ENCODE measurements at regions of chr22 and their contacts with region 1.

Region 1: DNA sequence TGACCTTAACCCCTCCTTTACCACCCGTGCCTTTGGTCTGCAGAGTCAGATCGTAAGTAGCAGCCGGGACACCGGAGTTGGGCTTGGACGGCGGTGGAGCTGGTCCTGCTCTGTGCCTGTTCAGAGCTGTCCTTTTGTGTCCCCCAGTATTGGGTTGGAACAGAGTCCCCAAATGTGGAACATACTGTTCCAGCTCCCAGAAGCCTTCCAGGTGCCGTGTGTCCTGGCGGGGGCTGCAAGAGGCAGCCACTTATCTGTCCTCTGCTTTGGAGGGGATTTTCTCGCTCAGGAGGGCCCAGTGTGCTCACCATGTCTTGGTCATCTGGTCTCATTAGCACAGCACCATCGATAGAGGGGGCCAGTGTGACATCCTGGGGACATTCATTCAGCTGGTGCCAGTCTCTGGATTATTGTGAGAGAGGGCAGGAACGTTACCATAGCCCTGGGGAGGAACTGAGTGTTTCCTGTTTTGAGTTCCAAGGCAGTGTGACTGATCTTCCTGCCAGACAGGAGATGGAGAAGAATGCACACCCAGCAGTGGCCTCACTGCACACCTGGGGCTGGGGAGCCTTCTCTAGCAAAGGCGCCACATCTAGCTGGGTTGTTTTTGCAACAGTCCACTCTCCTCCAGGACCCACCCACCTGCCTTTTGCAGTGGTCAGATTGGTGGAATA is 12.4 kb downstream of the CRELD2 start:
- DNase-seq: peak; percentile 92
- ATAC-seq: peak; percentile 42
- H3K4me3 ChIP-seq: peak overlapping the region in 4 of 5 experiments; percentile 4 to 29 (median 25)
- H3K4me3 Mint-ChIP-seq: peak overlapping the region; percentile 77
- H3K27ac ChIP-seq: peak overlapping the region; percentile 94 to 97
- H3K27ac Mint-ChIP-seq: peak overlapping the region; percentile 95
- H3K4me1 ChIP-seq: peaks cover 56 to 69% of the 10 kb centered on the region in 2 donors
- H3K4me1 Mint-ChIP-seq: peaks cover 53% of the 10 kb centered on the region
- H3K27me3 ChIP-seq: no peaks in the 10 kb centered on the region
- H3K27me3 Mint-ChIP-seq: no peaks in the 10 kb centered on the region
- CTCF ChIP-seq: peak; percentile 80

Region 2: GRCh38 chr22:49767355-49768062 is 163.4 kb before region 1 on chr22:
- CTCF ChIA-PET with region 1: interaction called, 11 read pairs
- POLR2A ChIA-PET with region 1: no interaction called
- intact Hi-C with region 1: no loop called
- DNase-seq: peak; percentile 65
- ATAC-seq: peak; percentile 59
- H3K4me3 ChIP-seq: no peak overlapping the region
- H3K4me3 Mint-ChIP-seq: no peak overlapping the region
- H3K27ac ChIP-seq: no peak overlapping the region
- H3K27ac Mint-ChIP-seq: no peak overlapping the region
- H3K4me1 ChIP-seq: no peaks in the 10 kb centered on the region
- H3K4me1 Mint-ChIP-seq: peaks cover 4% of the 10 kb centered on the region
- H3K27me3 ChIP-seq: no peaks in the 10 kb centered on the region
- H3K27me3 Mint-ChIP-seq: no peaks in the 10 kb centered on the region
- CTCF ChIP-seq: peak; percentile 79

Region 3: DNA sequence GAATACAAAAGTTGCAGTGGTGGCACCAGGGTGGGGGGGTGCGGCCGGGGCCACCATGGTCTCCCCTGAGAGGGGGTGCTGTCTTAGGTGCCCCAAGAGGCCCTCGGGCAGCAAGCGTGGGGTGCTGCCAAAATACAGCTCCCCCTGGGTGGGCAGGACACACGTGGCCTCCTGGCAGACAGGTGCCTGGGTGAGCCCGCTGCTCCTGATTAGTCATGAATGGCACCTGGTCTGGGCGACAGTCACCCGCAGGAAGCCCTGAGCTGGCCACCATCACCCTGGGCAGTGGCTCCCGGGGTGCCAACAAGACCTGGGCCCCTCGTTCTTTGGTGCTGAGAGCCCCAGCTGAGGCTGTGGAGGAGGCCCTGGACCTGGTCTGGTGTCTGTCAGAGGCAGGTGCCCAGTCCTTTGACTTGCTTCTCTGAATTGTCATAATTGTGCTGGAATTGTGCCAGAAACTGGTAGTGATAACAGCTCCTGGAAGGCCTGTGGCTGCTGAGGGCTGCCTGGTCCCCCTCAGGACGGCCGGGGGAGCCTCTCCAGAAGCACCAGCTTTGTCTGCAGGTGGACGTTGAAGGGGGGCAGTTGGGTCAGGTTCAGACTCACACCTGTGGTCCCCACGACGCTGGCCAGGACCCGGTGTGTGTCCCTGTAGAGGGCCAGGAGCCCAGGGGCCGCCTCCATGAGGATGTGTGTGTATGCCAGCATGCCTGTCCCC is 27.4 kb before region 1 on chr22:
- CTCF ChIA-PET with region 1: no interaction called
- POLR2A ChIA-PET with region 1: no interaction called
- intact Hi-C with region 1: no loop called
- DNase-seq: no peak
- ATAC-seq: no peak
- H3K4me3 ChIP-seq: no peak overlapping the region
- H3K4me3 Mint-ChIP-seq: no peak overlapping the region
- H3K27ac ChIP-seq: no peak overlapping the region
- H3K27ac Mint-ChIP-seq: no peak overlapping the region
- H3K4me1 ChIP-seq: no peaks in the 10 kb centered on the region
- H3K4me1 Mint-ChIP-seq: no peaks in the 10 kb centered on the region
- H3K27me3 ChIP-seq: no peaks in the 10 kb centered on the region
- H3K27me3 Mint-ChIP-seq: no peaks in the 10 kb centered on the region
- CTCF ChIP-seq: no peak

Region 4: DNA sequence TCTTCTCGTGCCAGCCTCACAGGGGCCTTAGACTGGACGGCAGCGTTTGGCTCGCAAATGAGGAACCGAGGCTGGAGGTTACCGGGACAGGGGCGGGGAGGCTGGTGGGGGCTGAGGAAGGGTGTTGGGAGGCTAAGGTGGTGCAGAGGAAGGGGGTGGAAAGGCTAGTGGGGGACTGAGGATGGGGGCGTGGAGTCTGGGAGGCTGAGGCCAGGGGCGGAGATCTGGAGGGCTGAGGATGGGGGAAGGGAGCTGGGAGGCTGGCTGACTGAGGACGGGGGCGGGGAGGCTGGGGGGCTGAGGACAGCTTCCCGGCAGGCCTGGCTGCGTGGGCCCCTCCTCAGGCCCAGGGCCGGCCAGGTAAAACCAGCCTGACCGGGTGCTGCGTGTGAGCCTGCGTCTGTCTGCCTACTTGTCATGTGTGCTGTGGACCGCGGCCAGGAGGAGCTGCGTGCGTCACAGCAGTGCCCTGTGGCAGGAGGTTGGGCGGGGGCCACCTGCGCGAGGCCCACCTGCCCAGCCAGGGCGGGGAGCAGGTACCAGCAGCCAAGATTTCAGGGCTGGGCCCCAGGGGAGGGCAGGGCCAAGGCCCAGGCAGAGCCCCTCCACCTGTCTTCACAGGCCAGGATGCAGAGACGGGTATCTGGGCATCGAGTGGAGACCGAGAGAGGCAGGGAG is 20.3 kb after region 1 on chr22:
- CTCF ChIA-PET with region 1: interaction called, 5 read pairs
- POLR2A ChIA-PET with region 1: interaction called, 22 read pairs
- intact Hi-C with region 1: loop called (anchors 2 kb)
- DNase-seq: peak; percentile 73
- ATAC-seq: peak; percentile 67
- H3K4me3 ChIP-seq: no peak overlapping the region
- H3K4me3 Mint-ChIP-seq: no peak overlapping the region
- H3K27ac ChIP-seq: no peak overlapping the region
- H3K27ac Mint-ChIP-seq: no peak overlapping the region
- H3K4me1 ChIP-seq: peaks cover 1 to 18% of the 10 kb centered on the region in 2 donors
- H3K4me1 Mint-ChIP-seq: peaks cover 2% of the 10 kb centered on the region
- H3K27me3 ChIP-seq: no peaks in the 10 kb centered on the region
- H3K27me3 Mint-ChIP-seq: no peaks in the 10 kb centered on the region
- CTCF ChIP-seq: no peak

Region 5: GRCh38 chr22:49970528-49971231 is 39.8 kb after region 1 on chr22:
- CTCF ChIA-PET with region 1: interaction called, 37 read pairs
- POLR2A ChIA-PET with region 1: interaction called, 27 read pairs
- intact Hi-C with region 1: loop called (anchors 2 kb)
- DNase-seq: peak; percentile 95
- ATAC-seq: peak; percentile 85
- H3K4me3 ChIP-seq: peak overlapping the region in 4 of 5 experiments; percentile 41 to 65 (median 55)
- H3K4me3 Mint-ChIP-seq: peak overlapping the region; percentile 84
- H3K27ac ChIP-seq: peak overlapping the region in 1 of 2 donors; percentile 40
- H3K27ac Mint-ChIP-seq: peak overlapping the region; percentile 96
- H3K4me1 ChIP-seq: peaks cover 43 to 56% of the 10 kb centered on the region in 2 donors
- H3K4me1 Mint-ChIP-seq: peaks cover 40% of the 10 kb centered on the region
- H3K27me3 ChIP-seq: no peaks in the 10 kb centered on the region
- H3K27me3 Mint-ChIP-seq: no peaks in the 10 kb centered on the region
- CTCF ChIP-seq: no peak

Region 6: DNA sequence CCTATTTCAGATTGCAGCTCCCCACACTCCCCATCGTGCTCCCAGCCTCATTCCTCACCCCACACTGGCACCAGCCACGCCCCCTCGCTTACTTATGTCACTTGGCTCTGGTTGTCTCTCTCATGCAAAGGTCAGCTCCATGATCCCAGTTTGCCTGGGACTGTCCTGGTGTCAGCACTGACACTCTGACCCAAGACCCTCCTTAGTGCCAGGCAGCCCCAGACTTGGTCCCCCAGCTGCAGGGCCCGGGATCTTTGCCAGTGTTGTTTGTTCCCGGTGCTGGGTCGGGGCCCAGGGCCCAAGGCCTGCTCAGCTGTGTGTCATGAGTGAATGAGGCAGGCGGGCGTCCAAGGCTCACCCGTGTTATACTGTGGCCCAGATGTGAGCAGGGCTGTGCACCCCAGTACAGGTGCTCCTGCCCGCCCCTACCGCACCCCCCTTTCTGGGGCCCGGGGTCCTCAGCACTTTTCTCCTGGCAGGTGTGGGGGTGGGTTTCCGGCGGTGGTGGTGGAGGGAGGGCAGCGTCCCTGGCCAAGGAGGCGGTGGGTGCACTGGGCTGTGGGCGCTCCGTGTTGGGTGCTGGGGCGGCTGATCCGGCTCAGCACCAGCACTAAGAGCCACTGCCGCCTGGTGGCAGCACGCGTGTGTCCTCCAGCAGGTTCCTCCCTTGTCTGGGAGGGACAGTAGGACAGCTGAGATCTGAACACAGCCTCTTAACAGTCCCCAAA is 62.2 kb after region 1 on chr22:
- CTCF ChIA-PET with region 1: interaction called, 68 read pairs
- POLR2A ChIA-PET with region 1: interaction called, 16 read pairs
- intact Hi-C with region 1: loop called (anchors 1 kb)
- DNase-seq: peak; percentile 82
- ATAC-seq: peak; percentile 96
- H3K4me3 ChIP-seq: no peak overlapping the region
- H3K4me3 Mint-ChIP-seq: peak overlapping the region; percentile 51
- H3K27ac ChIP-seq: no peak overlapping the region
- H3K27ac Mint-ChIP-seq: peak overlapping the region; percentile 82
- H3K4me1 ChIP-seq: peaks cover 11 to 24% of the 10 kb centered on the region in 2 donors
- H3K4me1 Mint-ChIP-seq: peaks cover 15% of the 10 kb centered on the region
- H3K27me3 ChIP-seq: no peaks in the 10 kb centered on the region
- H3K27me3 Mint-ChIP-seq: no peaks in the 10 kb centered on the region
- CTCF ChIP-seq: peak; percentile 87

Region 7: DNA sequence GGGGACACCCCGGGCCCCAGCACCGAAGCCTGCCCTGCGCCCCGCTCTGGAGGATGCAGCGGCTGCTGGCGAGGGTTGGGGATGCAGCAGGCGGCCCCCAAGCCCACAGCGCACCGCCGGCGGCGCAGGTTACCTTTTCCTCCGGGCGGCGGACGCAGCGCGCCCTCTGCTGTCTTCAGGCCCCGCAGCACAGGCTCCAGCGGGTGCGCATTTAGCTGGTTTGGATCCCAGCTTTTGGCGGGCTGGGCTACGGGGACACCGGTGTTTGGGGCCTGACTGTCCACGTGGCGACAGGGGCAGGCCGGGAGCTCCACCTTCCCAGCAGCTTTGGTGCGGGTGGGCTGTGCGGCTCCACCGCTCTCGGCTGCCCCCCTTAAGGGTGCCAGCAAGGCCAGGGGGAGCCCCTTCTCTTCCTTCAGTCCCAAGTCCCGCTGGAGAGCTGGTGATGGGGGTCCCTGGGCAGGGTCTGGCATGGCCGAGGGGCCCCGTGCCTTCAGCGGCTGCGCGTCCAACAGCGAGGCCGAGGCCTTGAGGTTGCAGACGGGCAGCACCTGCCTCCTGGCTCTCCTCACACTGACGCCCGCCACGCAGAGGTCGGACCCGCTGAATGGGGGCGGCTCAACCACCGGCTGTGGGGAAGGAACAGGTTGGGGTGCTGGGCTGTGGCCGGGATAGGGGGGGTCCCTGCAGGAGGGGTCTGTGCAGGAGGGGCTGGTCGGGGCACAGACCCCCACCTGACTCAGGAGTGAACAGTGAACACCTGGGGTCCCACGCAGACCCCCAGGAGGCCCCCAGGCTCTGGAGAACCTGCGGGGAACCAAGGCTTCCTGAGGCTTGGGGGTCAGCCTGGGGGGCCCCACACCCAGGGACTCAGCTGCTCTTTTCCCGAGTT is 99.7 kb after region 1 on chr22:
- CTCF ChIA-PET with region 1: interaction called, 127 read pairs
- POLR2A ChIA-PET with region 1: interaction called, 20 read pairs
- intact Hi-C with region 1: loop called (anchors 1 kb)
- DNase-seq: peak; percentile 87
- ATAC-seq: peak; percentile 96
- H3K4me3 ChIP-seq: peak overlapping the region in 3 of 5 experiments; percentile 20 to 35 (median 23)
- H3K4me3 Mint-ChIP-seq: no peak overlapping the region
- H3K27ac ChIP-seq: no peak overlapping the region
- H3K27ac Mint-ChIP-seq: no peak overlapping the region
- H3K4me1 ChIP-seq: peaks cover 22 to 24% of the 10 kb centered on the region in 2 donors
- H3K4me1 Mint-ChIP-seq: peaks cover 16% of the 10 kb centered on the region
- H3K27me3 ChIP-seq: peaks cover 0 to 13% (median 6%) of the 10 kb centered on the region in 4 experiments
- H3K27me3 Mint-ChIP-seq: peaks cover 7% of the 10 kb centered on the region
- CTCF ChIP-seq: peak; percentile 92

Region 8: GRCh38 chr22:50074551-50075530 is 144.0 kb after region 1 on chr22:
- CTCF ChIA-PET with region 1: no interaction called
- POLR2A ChIA-PET with region 1: no interaction called
- intact Hi-C with region 1: no loop called
- DNase-seq: no peak
- ATAC-seq: no peak
- H3K4me3 ChIP-seq: no peak overlapping the region
- H3K4me3 Mint-ChIP-seq: no peak overlapping the region
- H3K27ac ChIP-seq: no peak overlapping the region
- H3K27ac Mint-ChIP-seq: no peak overlapping the region
- H3K4me1 ChIP-seq: no peaks in the 10 kb centered on the region
- H3K4me1 Mint-ChIP-seq: peaks cover 4% of the 10 kb centered on the region
- H3K27me3 ChIP-seq: no peaks in the 10 kb centered on the region
- H3K27me3 Mint-ChIP-seq: peaks cover 10% of the 10 kb centered on the region
- CTCF ChIP-seq: no peak

Region 9: DNA sequence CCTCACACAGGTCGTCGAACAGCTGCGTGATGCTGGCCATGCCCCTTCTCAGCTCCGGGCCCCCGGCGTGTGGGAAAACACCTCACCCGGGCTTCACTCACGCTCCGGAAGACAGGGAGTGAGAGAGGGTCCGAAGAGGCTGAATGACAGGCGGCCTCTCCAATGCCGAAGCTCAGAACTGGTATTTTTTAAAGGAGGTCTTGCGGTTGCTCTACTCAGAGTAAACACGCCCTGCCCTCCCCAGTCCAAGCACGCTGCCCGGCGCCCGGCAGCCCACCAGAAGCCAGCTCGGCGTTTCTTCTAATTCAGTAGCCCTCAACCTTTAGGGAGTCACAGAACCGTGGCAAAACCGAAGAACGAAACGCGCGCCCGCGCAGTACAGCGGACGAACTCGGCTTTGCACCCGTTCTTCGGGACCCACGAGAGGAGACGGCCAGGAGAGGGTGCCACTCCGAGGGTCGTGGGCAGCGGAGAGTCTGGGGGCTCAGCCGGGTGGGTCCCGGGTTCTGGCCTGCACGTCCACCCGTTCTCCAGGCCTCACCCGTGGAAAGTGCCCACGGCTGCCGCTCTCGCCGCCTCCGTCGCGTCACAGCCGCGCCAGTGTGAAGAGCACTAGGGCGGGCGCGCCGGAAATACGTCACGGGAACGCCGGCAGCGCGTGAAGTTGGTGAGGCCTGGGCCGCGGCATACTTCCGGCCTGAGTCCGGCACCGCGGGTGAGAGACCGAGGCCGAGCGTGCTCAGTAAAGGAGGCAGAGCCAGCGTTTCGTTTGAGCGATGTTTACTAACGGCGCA is 313.7 kb after region 1 on chr22 and contains the start of gene TUBGCP6:
- CTCF ChIA-PET with region 1: interaction called, 3 read pairs
- POLR2A ChIA-PET with region 1: no interaction called
- intact Hi-C with region 1: loop called (anchors 1 kb)
- DNase-seq: peak; percentile 96
- ATAC-seq: peak; percentile 81
- H3K4me3 ChIP-seq: peak within 1 kb of the TSS; percentile 65 to 99 (median 90)
- H3K4me3 Mint-ChIP-seq: peak within 1 kb of the TSS; percentile 96
- H3K27ac ChIP-seq: peak within 1 kb of the TSS; percentile 91 to 96
- H3K27ac Mint-ChIP-seq: peak within 1 kb of the TSS; percentile 99
- H3K4me1 ChIP-seq: peaks cover 33 to 66% of the 10 kb centered on the region in 2 donors
- H3K4me1 Mint-ChIP-seq: peaks cover 40% of the 10 kb centered on the region
- H3K27me3 ChIP-seq: no peaks in the 10 kb centered on the region
- H3K27me3 Mint-ChIP-seq: no peaks in the 10 kb centered on the region
- CTCF ChIP-seq: no peak
- total RNA-seq, gene TUBGCP6: 137 and 139 TPM in 2 replicates

Measured in B cell (primary cell).